Tibial artery (tissue), 4 donors: ENCODE measurements at regions of chr2 and their contacts with region 1.

Region 1: GRCh38 chr2:203246646-203247045 is 7.8 kb downstream of the CYP20A1 start:
- DNase-seq: no peak
- H3K4me3 ChIP-seq: no peak overlapping the region
- H3K27ac ChIP-seq: no peak overlapping the region
- H3K4me1 ChIP-seq: peaks cover 0 to under 1% (median 0%) of the 10 kb centered on the region in 4 donors
- H3K27me3 ChIP-seq: no peaks in the 10 kb centered on the region
- CTCF ChIP-seq: no peak

Region 2: DNA sequence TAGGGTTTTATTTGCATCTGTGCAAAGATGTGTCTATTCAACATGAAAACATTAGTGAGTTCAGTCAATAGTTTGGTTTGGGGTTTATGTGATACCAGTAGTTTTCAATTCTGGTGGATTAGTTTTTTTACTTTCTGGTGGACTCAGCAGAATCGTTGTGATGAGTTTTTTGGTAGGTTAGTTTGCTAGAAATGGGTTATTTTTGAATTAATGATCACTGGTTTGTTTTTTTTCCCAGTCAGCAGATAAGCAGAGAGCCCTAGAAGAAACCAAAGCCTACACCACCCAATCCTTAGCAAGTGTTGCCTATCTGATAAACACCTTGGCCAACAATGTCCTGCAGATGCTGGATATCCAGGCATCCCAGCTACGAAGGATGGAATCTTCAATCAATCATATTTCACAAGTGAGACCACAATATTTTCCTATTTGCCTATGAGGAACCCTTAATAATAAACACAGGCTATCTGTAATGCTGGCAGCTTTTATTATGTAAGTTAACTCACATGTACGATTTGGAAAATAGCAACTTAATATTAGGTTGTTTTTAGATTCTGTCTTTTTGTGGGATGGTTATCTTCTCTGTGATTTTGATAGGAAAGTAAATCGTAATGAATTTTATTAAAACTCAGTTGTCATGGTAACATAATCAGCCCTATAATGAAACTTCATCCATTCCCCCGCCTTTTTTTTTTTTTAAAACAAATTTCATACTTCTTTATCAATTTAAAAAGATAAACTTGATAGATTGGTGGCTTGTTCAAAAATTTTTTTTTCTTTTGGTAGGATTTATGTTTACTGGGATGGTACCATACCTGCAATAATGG is 120.2 kb after region 1 on chr2:
- intact Hi-C with region 1: no loop called
- DNase-seq: no peak
- H3K4me3 ChIP-seq: no peak overlapping the region
- H3K27ac ChIP-seq: no peak overlapping the region
- H3K4me1 ChIP-seq: peaks cover 0 to 17% (median 3%) of the 10 kb centered on the region in 4 donors
- H3K27me3 ChIP-seq: no peaks in the 10 kb centered on the region
- CTCF ChIP-seq: no peak

Region 3: GRCh38 chr2:203440671-203441070 is 194.0 kb after region 1 on chr2:
- intact Hi-C with region 1: loop called (anchors 2 kb)
- DNase-seq: no peak
- H3K4me3 ChIP-seq: no peak overlapping the region
- H3K27ac ChIP-seq: no peak overlapping the region
- H3K4me1 ChIP-seq: no peaks in the 10 kb centered on the region
- H3K27me3 ChIP-seq: no peaks in the 10 kb centered on the region
- CTCF ChIP-seq: no peak

Region 4: GRCh38 chr2:204127238-204127637 is 880.6 kb after region 1 on chr2:
- intact Hi-C with region 1: no loop called
- DNase-seq: no peak
- H3K4me3 ChIP-seq: no peak overlapping the region
- H3K27ac ChIP-seq: no peak overlapping the region
- H3K4me1 ChIP-seq: peaks cover 0 to 6% (median 0%) of the 10 kb centered on the region in 4 donors
- H3K27me3 ChIP-seq: no peaks in the 10 kb centered on the region
- CTCF ChIP-seq: no peak